CD4-positive, alpha-beta T cell (primary cell): ENCODE measurements at regions of chr3 and their contacts with region 1.

Region 1: GRCh38 chr3:51498876-51499738 is 708 bp downstream of the DCAF1 start:
- DNase-seq: peak; percentile 58 to 91 (median 74)
- ATAC-seq: peak; percentile 52
- H3K4me3 ChIP-seq: peak overlapping the region; percentile 96
- H3K4me3 Mint-ChIP-seq: peak overlapping the region; percentile 94
- H3K27ac ChIP-seq: peak overlapping the region; percentile 91 to 96
- H3K27ac Mint-ChIP-seq: peak overlapping the region; percentile 86
- H3K4me1 ChIP-seq: peaks cover 34% of the 10 kb centered on the region
- H3K4me1 Mint-ChIP-seq: peaks cover 29% of the 10 kb centered on the region
- H3K27me3 ChIP-seq: no peaks in the 10 kb centered on the region
- H3K27me3 Mint-ChIP-seq: no peaks in the 10 kb centered on the region
- CTCF ChIP-seq: no peak

Region 2: DNA sequence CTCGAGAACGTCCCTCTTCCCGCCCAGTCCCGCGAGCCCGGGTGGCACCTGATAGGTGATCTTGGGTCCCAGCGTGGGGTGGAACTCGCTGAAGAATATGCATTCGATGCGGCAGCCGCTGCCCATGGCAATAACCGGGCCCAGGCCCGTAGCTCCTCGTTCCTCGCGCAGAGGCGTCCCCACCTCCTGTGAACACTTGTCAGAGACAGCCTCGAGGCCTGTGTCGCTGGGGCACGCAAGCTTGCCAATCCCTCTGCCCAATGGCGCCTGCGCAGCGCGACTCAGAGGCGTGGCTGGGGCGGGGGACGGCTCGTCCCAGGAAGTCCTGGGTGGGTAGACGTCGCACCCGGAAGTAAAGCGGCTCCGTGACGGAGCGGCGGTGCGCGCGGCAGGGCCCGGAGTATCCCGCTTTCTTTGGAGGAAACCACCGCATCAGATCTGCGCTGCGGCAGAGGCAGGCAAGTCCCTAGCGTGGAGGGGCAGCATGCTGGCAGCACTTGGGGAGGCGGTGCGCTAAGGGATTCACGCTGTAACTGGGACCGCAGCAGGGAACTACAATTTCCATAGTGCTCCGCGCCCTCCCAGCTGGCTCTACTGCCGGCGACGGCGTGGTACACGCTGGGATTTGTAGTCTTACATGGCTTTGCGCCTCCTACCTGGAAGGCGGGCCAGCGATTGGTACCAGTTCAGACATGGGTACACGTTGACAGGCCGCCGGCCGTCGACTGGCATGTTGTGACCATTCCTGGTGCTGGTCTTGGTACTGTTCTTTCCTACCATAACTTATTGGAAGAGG is 1148.4 kb before region 1 on chr3 and contains the starts of genes CYB561D2 and NPRL2:
- CTCF ChIA-PET with region 1: no interaction called
- POLR2A ChIA-PET with region 1: no interaction called
- intact Hi-C with region 1: loop called in 1 of 2 experiments (anchors 5 kb)
- DNase-seq: peak; percentile 98 to 100 (median 99)
- ATAC-seq: peak; percentile 85
- H3K4me3 ChIP-seq: peak within 1 kb of the TSS; percentile 76
- H3K4me3 Mint-ChIP-seq: peak within 1 kb of the TSS; percentile 97
- H3K27ac ChIP-seq: peak within 1 kb of the TSS; percentile 94 to 97
- H3K27ac Mint-ChIP-seq: peak within 1 kb of the TSS; percentile 99
- H3K4me1 ChIP-seq: peaks cover 73% of the 10 kb centered on the region
- H3K4me1 Mint-ChIP-seq: peaks cover 64% of the 10 kb centered on the region
- H3K27me3 ChIP-seq: no peaks in the 10 kb centered on the region
- H3K27me3 Mint-ChIP-seq: no peaks in the 10 kb centered on the region
- CTCF ChIP-seq: no peak
- total RNA-seq, gene CYB561D2: 19.8 TPM
- total RNA-seq, gene NPRL2: 29.4 to 33.2 TPM

Region 3: GRCh38 chr3:50568947-50569749 is 930.0 kb before region 1 on chr3 and contains the start of gene HEMK1:
- CTCF ChIA-PET with region 1: no interaction called
- POLR2A ChIA-PET with region 1: interaction called, 7 read pairs
- intact Hi-C with region 1: loop called in 1 of 2 experiments (anchors 5 kb)
- DNase-seq: peak; percentile 84 to 97 (median 91)
- ATAC-seq: peak; percentile 64
- H3K4me3 ChIP-seq: peak within 1 kb of the TSS; percentile 77
- H3K4me3 Mint-ChIP-seq: peak within 1 kb of the TSS; percentile 97
- H3K27ac ChIP-seq: peak within 1 kb of the TSS; percentile 80 to 83
- H3K27ac Mint-ChIP-seq: peak within 1 kb of the TSS; percentile 89
- H3K4me1 ChIP-seq: peaks cover 79% of the 10 kb centered on the region
- H3K4me1 Mint-ChIP-seq: peaks cover 78% of the 10 kb centered on the region
- H3K27me3 ChIP-seq: no peaks in the 10 kb centered on the region
- H3K27me3 Mint-ChIP-seq: no peaks in the 10 kb centered on the region
- CTCF ChIP-seq: no peak
- total RNA-seq, gene HEMK1: 12.4 to 14.6 TPM

Region 4: DNA sequence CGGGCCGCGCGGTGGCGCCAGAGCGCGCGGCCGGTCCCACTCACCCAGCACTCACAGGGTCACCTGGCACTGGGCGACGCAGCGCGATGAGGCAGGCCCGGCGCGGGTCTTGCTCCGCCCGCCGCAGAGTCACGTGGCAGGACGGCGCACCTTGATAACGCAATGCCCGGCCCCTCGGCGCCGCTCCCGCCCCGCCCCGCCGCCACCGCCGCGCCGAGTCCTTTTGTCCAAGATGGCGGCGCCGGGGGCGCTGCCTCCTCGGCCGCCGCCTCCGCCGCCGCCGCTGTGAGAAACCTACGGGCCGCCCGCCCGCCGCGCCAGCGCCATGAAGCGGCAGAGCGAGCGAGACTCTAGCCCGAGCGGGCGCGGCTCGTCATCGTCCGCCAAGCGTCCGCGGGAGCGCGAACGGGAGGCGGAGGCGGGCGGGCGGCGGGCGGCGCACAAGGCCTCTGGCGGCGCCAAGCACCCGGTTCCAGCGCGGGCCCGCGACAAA is 108.0 kb before region 1 on chr3 and contains the start of gene RBM15B:
- CTCF ChIA-PET with region 1: interaction called, 12 read pairs
- POLR2A ChIA-PET with region 1: interaction called, 17 read pairs
- intact Hi-C with region 1: loop called (anchors 1 to 2 kb)
- DNase-seq: peak; percentile 94 to 98 (median 97)
- ATAC-seq: peak; percentile 86
- H3K4me3 ChIP-seq: peak within 1 kb of the TSS; percentile 63
- H3K4me3 Mint-ChIP-seq: peak within 1 kb of the TSS; percentile 86
- H3K27ac ChIP-seq: peak within 1 kb of the TSS; percentile 70 to 88
- H3K27ac Mint-ChIP-seq: peak within 1 kb of the TSS; percentile 91
- H3K4me1 ChIP-seq: peaks cover 90% of the 10 kb centered on the region
- H3K4me1 Mint-ChIP-seq: peaks cover 69% of the 10 kb centered on the region
- H3K27me3 ChIP-seq: no peaks in the 10 kb centered on the region
- H3K27me3 Mint-ChIP-seq: no peaks in the 10 kb centered on the region
- CTCF ChIP-seq: peak; percentile 10
- total RNA-seq, gene RBM15B: 29.1 to 29.2 TPM

Region 5: GRCh38 chr3:51670823-51671733 is 172.0 kb after region 1 on chr3 and contains the start of gene TEX264:
- CTCF ChIA-PET with region 1: interaction called, 19 read pairs
- POLR2A ChIA-PET with region 1: interaction called, 121 read pairs
- intact Hi-C with region 1: loop called (anchors 1 kb)
- DNase-seq: peak; percentile 88 to 100 (median 95)
- ATAC-seq: peak; percentile 75
- H3K4me3 ChIP-seq: peak within 1 kb of the TSS; percentile 98
- H3K4me3 Mint-ChIP-seq: peak within 1 kb of the TSS; percentile 94
- H3K27ac ChIP-seq: peak within 1 kb of the TSS; percentile 83 to 91
- H3K27ac Mint-ChIP-seq: peak within 1 kb of the TSS; percentile 97
- H3K4me1 ChIP-seq: peaks cover 67% of the 10 kb centered on the region
- H3K4me1 Mint-ChIP-seq: peaks cover 80% of the 10 kb centered on the region
- H3K27me3 ChIP-seq: no peaks in the 10 kb centered on the region
- H3K27me3 Mint-ChIP-seq: no peaks in the 10 kb centered on the region
- CTCF ChIP-seq: no peak
- total RNA-seq, gene TEX264: 24.9 to 25.9 TPM

Region 6: DNA sequence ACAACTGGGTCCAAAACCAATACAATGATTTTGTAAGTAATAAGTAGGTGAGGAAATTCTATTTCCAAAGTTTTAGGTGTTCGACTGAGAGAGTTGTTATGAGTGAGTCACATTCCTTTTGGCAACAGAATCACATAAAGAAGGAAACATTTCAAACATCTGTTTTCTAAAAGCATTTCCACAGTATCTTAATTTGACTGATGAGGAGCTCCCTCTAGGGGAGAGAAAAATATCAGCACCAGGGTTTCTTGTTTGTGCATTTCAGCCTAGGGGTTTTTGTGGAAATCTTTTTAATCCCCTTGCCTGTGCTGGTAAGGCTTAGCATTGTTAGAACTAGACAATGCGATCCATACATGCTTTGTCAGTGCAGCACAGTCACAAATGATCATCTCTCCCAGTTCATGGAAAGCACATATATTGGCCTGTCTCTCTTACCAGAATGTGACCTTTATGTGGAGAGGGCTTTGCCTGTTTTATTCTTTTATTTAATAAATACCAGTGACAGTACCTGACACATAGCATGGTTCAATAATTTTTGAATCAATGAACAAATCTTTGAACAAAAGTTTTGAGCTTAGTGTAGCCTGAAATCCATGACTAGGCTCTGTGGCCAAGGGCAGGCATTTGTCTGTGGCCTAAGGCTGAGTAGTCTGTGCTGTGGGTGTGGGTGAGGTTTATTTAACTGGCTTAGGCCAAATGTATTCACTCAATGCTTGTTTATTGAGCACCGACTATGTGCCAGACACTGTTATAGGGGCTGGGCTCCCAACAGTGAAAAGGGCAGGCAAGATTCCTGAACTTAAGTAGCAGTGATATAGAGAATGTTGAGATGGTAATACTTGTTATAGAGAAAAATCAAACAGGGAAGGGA is 301.0 kb after region 1 on chr3:
- CTCF ChIA-PET with region 1: interaction called, 15 read pairs
- POLR2A ChIA-PET with region 1: interaction called, 5 read pairs
- intact Hi-C with region 1: loop called (anchors 1 kb)
- DNase-seq: peak in 5 of 14 experiments; percentile 9 to 69 (median 67)
- ATAC-seq: peak; percentile 54
- H3K4me3 ChIP-seq: no peak overlapping the region
- H3K4me3 Mint-ChIP-seq: no peak overlapping the region
- H3K27ac ChIP-seq: no peak overlapping the region
- H3K27ac Mint-ChIP-seq: no peak overlapping the region
- H3K4me1 ChIP-seq: peaks cover 2% of the 10 kb centered on the region
- H3K4me1 Mint-ChIP-seq: peaks cover 10% of the 10 kb centered on the region
- H3K27me3 ChIP-seq: no peaks in the 10 kb centered on the region
- H3K27me3 Mint-ChIP-seq: peaks cover 11% of the 10 kb centered on the region
- CTCF ChIP-seq: peak; percentile 77

Region 7: DNA sequence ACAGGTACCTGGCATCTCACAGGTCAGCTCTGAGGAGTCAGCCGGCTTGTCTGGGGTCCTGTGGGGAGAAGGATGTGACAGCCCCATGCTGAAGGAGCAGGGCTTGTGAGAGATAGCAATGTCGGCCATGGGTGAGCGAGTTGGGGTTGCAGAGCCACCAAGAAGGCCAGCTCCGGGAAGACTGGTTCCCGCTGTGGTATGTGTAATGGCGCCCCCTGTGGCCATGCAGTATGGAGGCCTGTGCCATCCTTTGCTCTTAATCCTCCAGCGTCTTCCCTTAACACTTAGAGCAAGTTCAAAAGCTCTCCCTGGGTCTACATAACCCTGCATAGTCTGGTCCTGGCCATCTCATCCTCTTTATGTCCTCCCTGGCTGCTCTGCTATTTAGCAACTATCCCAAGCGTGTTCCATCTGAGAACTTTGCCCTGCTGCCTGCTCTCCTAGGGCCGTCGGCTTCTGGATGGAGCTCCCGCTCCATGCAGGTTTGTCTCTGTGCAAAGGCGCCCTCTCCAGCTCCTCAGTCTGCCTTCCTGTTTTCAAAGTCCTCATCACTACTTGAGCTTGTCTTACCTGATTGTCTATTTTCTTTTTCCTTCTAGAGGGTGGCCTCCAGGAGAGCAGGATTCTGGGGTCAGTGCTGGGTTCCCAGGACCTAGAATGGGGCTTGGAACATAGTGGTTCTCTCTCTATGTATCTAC is 320.8 kb after region 1 on chr3:
- CTCF ChIA-PET with region 1: no interaction called
- POLR2A ChIA-PET with region 1: no interaction called
- intact Hi-C with region 1: no loop called
- DNase-seq: peak in 2 of 14 experiments; percentile 10 to 29
- ATAC-seq: no peak
- H3K4me3 ChIP-seq: no peak overlapping the region
- H3K4me3 Mint-ChIP-seq: no peak overlapping the region
- H3K27ac ChIP-seq: no peak overlapping the region
- H3K27ac Mint-ChIP-seq: no peak overlapping the region
- H3K4me1 ChIP-seq: peaks cover 3% of the 10 kb centered on the region
- H3K4me1 Mint-ChIP-seq: peaks cover 6% of the 10 kb centered on the region
- H3K27me3 ChIP-seq: peaks cover 3 to 8% of the 10 kb centered on the region in 2 experiments
- H3K27me3 Mint-ChIP-seq: peaks cover 45% of the 10 kb centered on the region
- CTCF ChIP-seq: no peak

Region 8: GRCh38 chr3:52144034-52144795 is 645.1 kb after region 1 on chr3:
- CTCF ChIA-PET with region 1: no interaction called
- POLR2A ChIA-PET with region 1: no interaction called
- intact Hi-C with region 1: loop called in 1 of 2 experiments (anchors 10 kb)
- DNase-seq: peak; percentile 79 to 93 (median 87)
- ATAC-seq: peak; percentile 100
- H3K4me3 ChIP-seq: no peak overlapping the region
- H3K4me3 Mint-ChIP-seq: no peak overlapping the region
- H3K27ac ChIP-seq: no peak overlapping the region
- H3K27ac Mint-ChIP-seq: no peak overlapping the region
- H3K4me1 ChIP-seq: peaks cover 12% of the 10 kb centered on the region
- H3K4me1 Mint-ChIP-seq: peaks cover 8% of the 10 kb centered on the region
- H3K27me3 ChIP-seq: no peaks in the 10 kb centered on the region
- H3K27me3 Mint-ChIP-seq: no peaks in the 10 kb centered on the region
- CTCF ChIP-seq: peak; percentile 92